ENCODE measurements at regions of chr2 and their contacts with region 1.

Region 1: DNA sequence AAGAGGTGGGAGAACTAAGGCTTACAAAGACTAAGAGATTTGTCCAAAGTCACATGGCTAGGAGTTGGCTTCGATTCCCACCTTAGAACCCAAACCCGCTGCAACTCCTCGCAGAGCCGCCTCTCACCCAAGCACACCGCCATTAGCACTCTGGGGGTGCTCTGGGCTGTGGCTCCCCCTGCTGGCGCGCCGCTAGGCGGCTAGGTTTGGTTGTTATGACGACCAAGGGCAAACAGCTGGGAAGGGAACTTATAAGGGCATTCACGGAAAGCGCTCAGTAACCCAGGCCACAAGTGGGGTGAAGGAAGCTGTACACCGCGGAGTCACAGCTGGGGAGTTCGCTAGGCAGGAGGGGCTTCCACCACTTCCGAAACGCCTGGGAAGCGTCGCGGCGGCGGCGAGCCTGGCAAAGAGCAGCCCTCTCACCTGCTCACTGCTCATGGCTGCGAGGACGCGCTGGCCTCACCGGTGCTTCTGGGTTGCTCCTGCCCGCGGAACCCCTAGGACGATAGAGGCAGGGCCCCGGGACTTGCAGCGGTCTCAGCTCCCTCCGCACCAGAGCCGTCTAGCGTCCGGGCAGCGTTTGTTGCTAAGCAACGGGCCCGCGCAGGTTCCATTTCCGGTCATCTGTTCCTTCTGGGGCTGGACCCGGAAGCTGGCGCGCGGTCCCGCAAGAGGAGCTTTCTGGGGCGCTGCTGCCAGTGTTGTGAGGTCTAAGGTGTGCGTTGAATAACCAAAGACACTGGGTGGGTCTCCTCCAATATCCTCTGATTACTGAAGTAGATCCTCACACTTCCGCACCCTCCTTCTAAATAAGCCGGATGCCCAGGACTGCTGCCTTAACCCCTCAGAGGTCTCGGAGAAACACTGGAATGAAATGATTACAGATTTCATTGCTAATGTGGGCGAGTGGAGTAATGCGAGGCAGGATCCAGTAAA is at the start of gene DNAH7:
- DNase-seq: peak; percentile 81 to 97 (median 91)
- ATAC-seq: peak; percentile 96
- H3K4me3 ChIP-seq: peak within 1 kb of the TSS; percentile 69
- H3K4me3 Mint-ChIP-seq: peak within 1 kb of the TSS; percentile 86
- H3K27ac ChIP-seq: peak within 1 kb of the TSS in 1 of 2 donors; percentile 40
- H3K27ac Mint-ChIP-seq: peak within 1 kb of the TSS; percentile 47
- H3K4me1 ChIP-seq: peaks cover 13% of the 10 kb centered on the region
- H3K4me1 Mint-ChIP-seq: peaks cover 19% of the 10 kb centered on the region
- H3K27me3 ChIP-seq: no peaks in the 10 kb centered on the region
- H3K27me3 Mint-ChIP-seq: peaks cover under 1% of the 10 kb centered on the region
- CTCF ChIP-seq: peak; percentile 94
- total RNA-seq, gene DNAH7: not detected

Region 2: GRCh38 chr2:194166818-194167217 is 1901.7 kb before region 1 on chr2:
- CTCF ChIA-PET with region 1: no interaction called
- POLR2A ChIA-PET with region 1: no interaction called
- intact Hi-C with region 1: loop called in 1 of 2 experiments (anchors 5 kb)
- DNase-seq: peak in 3 of 14 experiments; percentile 11 to 22 (median 21)
- ATAC-seq: no peak
- H3K4me3 ChIP-seq: no peak overlapping the region
- H3K4me3 Mint-ChIP-seq: no peak overlapping the region
- H3K27ac ChIP-seq: no peak overlapping the region
- H3K27ac Mint-ChIP-seq: no peak overlapping the region
- H3K4me1 ChIP-seq: no peaks in the 10 kb centered on the region
- H3K4me1 Mint-ChIP-seq: no peaks in the 10 kb centered on the region
- H3K27me3 ChIP-seq: no peaks in the 10 kb centered on the region
- H3K27me3 Mint-ChIP-seq: peaks cover 5% of the 10 kb centered on the region
- CTCF ChIP-seq: peak; percentile 38

Region 3: DNA sequence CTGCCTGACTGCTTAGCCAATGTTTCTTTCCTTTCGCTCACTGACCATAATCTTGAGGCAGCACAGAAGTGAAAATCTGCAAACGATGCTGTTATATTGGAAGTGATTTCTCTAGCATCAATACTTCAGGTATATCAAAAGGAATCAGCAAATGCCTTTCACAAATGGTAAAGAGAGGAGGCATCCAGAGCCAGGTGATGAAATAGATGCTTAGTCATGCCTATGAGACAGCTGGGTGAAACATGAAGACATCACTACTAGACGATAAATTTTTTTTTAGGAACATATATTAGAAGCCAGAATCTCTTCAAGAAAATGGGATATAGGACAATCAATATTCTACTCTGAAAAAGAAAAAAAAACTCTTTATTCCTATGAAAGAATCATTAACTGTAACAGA is 660.8 kb before region 1 on chr2:
- CTCF ChIA-PET with region 1: no interaction called
- POLR2A ChIA-PET with region 1: no interaction called
- intact Hi-C with region 1: loop called in 1 of 2 experiments (anchors 5 kb)
- DNase-seq: no peak
- ATAC-seq: no peak
- H3K4me3 ChIP-seq: no peak overlapping the region
- H3K4me3 Mint-ChIP-seq: no peak overlapping the region
- H3K27ac ChIP-seq: no peak overlapping the region
- H3K27ac Mint-ChIP-seq: no peak overlapping the region
- H3K4me1 ChIP-seq: no peaks in the 10 kb centered on the region
- H3K4me1 Mint-ChIP-seq: no peaks in the 10 kb centered on the region
- H3K27me3 ChIP-seq: no peaks in the 10 kb centered on the region
- H3K27me3 Mint-ChIP-seq: no peaks in the 10 kb centered on the region
- CTCF ChIP-seq: no peak

Region 4: GRCh38 chr2:195498176-195498575 is 570.4 kb before region 1 on chr2:
- CTCF ChIA-PET with region 1: interaction called, 3 read pairs
- POLR2A ChIA-PET with region 1: no interaction called
- intact Hi-C with region 1: loop called in 1 of 2 experiments (anchors 5 kb)
- DNase-seq: peak; percentile 39 to 82 (median 60)
- ATAC-seq: peak; percentile 60
- H3K4me3 ChIP-seq: no peak overlapping the region
- H3K4me3 Mint-ChIP-seq: no peak overlapping the region
- H3K27ac ChIP-seq: no peak overlapping the region
- H3K27ac Mint-ChIP-seq: no peak overlapping the region
- H3K4me1 ChIP-seq: peaks cover 6% of the 10 kb centered on the region
- H3K4me1 Mint-ChIP-seq: peaks cover 41% of the 10 kb centered on the region
- H3K27me3 ChIP-seq: no peaks in the 10 kb centered on the region
- H3K27me3 Mint-ChIP-seq: no peaks in the 10 kb centered on the region
- CTCF ChIP-seq: peak; percentile 79

Region 5: DNA sequence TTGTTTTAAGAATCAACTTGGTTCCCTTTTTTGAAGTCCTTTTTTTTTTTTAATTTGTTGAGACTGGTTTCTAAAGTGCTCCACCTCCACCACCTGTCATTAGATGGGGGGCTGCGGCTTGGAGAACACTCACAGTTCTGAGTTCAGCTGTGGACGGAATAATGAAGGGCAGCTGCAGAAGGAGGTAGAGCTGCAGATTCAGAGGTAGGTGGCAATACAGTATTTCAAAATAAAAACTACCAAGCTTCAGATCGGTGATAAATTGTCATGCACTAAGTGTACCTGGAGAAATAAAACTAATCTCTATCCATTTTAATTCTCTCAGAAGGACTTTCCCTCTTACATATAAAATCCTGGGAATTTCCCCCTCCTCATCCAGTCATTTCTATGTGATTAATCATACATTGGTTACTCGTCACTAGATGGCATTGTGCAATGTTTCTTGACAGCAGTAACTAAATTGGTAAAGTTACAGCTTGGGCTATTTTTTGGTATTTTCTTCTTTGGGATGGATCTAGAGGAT is 492.6 kb before region 1 on chr2:
- CTCF ChIA-PET with region 1: interaction called, 6 read pairs
- POLR2A ChIA-PET with region 1: no interaction called
- intact Hi-C with region 1: loop called in 1 of 2 experiments (anchors 10 kb)
- DNase-seq: peak in 3 of 14 experiments; percentile 45 to 68 (median 67)
- ATAC-seq: no peak
- H3K4me3 ChIP-seq: no peak overlapping the region
- H3K4me3 Mint-ChIP-seq: peak overlapping the region; percentile 42
- H3K27ac ChIP-seq: no peak overlapping the region
- H3K27ac Mint-ChIP-seq: peak overlapping the region; percentile 76
- H3K4me1 ChIP-seq: peaks cover 25% of the 10 kb centered on the region
- H3K4me1 Mint-ChIP-seq: peaks cover 74% of the 10 kb centered on the region
- H3K27me3 ChIP-seq: no peaks in the 10 kb centered on the region
- H3K27me3 Mint-ChIP-seq: no peaks in the 10 kb centered on the region
- CTCF ChIP-seq: no peak

Region 6: DNA sequence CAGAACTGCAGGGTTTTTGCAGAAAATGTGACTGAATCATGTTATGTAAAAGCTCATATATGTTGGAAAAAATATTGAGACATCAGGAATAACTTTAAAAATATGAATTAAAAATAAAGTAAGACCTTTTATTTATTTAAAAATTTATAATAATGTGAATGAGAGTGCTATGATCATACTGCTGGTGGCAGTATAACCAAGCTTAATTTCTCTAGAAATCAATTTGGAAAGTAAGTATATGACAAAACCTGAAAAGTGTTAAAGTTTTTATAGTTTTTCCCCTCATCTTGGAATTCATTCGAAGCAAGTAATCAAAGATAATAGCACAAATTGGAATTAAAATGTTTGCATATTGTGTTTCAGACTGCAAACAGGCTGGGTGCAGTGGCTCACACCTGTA is 404.0 kb before region 1 on chr2:
- CTCF ChIA-PET with region 1: interaction called, 12 read pairs
- POLR2A ChIA-PET with region 1: interaction called, 3 read pairs
- intact Hi-C with region 1: loop called (anchors 1 to 5 kb)
- DNase-seq: no peak
- ATAC-seq: no peak
- H3K4me3 ChIP-seq: no peak overlapping the region
- H3K4me3 Mint-ChIP-seq: no peak overlapping the region
- H3K27ac ChIP-seq: no peak overlapping the region
- H3K27ac Mint-ChIP-seq: peak overlapping the region; percentile 86
- H3K4me1 ChIP-seq: peaks cover 16% of the 10 kb centered on the region
- H3K4me1 Mint-ChIP-seq: peaks cover 76% of the 10 kb centered on the region
- H3K27me3 ChIP-seq: no peaks in the 10 kb centered on the region
- H3K27me3 Mint-ChIP-seq: no peaks in the 10 kb centered on the region
- CTCF ChIP-seq: peak; percentile 25

Region 7: DNA sequence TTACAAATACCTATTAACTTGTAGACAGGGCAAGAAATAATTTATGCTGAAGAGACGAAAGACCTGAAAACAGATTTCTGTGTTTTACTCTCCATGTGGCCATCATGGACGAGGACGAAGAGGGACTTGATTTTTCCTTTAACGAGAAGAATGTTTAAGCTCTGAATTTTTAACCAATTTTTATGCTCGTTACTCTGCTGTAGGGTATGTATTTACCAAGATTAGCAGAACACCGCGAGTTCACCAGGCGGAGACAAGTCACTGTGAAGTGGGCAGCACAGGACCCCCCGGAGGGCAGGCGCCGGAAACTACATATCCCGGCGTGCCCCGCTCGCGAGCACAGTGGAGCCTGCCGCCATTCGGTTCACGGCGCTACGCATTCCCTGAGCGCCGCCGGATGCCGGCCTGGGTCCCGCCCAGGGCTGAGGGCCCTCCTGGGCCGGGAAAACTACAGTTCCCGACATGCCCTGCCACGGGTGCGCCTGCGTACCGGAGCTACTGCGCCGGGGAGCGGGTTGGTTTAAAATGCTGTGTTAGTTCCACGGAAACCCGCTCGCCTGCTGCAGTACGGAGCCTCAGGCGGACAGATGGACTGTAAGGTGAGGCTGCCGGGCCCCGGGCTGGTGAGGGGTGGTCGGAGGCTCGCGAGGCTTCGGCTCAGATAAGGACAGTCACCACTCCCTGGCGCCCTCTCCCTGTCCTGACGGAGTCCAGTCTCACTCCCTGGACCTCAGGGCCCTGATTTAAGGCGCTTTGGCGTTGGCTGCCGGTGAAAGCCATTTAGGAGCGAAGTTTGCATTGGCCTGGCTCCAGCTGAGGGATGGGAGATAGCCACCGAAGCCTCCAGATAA is 570.9 kb after region 1 on chr2 and contains the start of gene CCDC150:
- CTCF ChIA-PET with region 1: interaction called, 4 read pairs
- POLR2A ChIA-PET with region 1: interaction called, 3 read pairs
- intact Hi-C with region 1: loop called (anchors 5 to 10 kb)
- DNase-seq: peak; percentile 88 to 96 (median 92)
- ATAC-seq: peak; percentile 100
- H3K4me3 ChIP-seq: peak within 1 kb of the TSS; percentile 68
- H3K4me3 Mint-ChIP-seq: peak within 1 kb of the TSS; percentile 91
- H3K27ac ChIP-seq: no peak within 1 kb of the TSS
- H3K27ac Mint-ChIP-seq: peak within 1 kb of the TSS; percentile 40
- H3K4me1 ChIP-seq: peaks cover 12% of the 10 kb centered on the region
- H3K4me1 Mint-ChIP-seq: peaks cover 17% of the 10 kb centered on the region
- H3K27me3 ChIP-seq: no peaks in the 10 kb centered on the region
- H3K27me3 Mint-ChIP-seq: no peaks in the 10 kb centered on the region
- CTCF ChIP-seq: no peak
- total RNA-seq, gene CCDC150: 0.22 to 0.75 TPM

Measured in CD4-positive, alpha-beta T cell (primary cell).